ENCODE measurements at regions of chr20 and their contacts with region 1.

Region 1: GRCh38 chr20:1965520-1966351 is 28.1 kb downstream of the PDYN start:
- H3K4me3 ChIP-seq: no peak overlapping the region
- H3K27ac ChIP-seq: no peak overlapping the region
- H3K4me1 ChIP-seq: no peaks in the 10 kb centered on the region
- CTCF ChIP-seq: peak; percentile 86

Region 2: GRCh38 chr20:1952737-1953530 is 12.8 kb before region 1 on chr20:
- CTCF ChIA-PET with region 1: interaction called, 15 read pairs
- POLR2A ChIA-PET with region 1: no interaction called
- H3K4me3 ChIP-seq: no peak overlapping the region
- H3K27ac ChIP-seq: no peak overlapping the region
- H3K4me1 ChIP-seq: no peaks in the 10 kb centered on the region
- CTCF ChIP-seq: no peak